Adrenal gland (tissue), 19 donors: ENCODE measurements at regions of chr7 and their contacts with region 1.

Region 1: GRCh38 chr7:37833107-37833817 is 15.1 kb upstream of the NME8 start:
- DNase-seq: peak; percentile 21 to 58 (median 34)
- H3K4me3 ChIP-seq: peak overlapping the region in 1 of 4 donors; percentile 41
- H3K27ac ChIP-seq: no peak overlapping the region
- H3K4me1 ChIP-seq: no peaks in the 10 kb centered on the region
- H3K27me3 ChIP-seq: no peaks in the 10 kb centered on the region
- CTCF ChIP-seq: peak; percentile 38 to 73 (median 65)
- POLR2A ChIP-seq: no peak

Region 2: GRCh38 chr7:37201003-37201875 is 632.0 kb before region 1 on chr7:
- intact Hi-C with region 1: loop called in 1 of 2 experiments (anchors 10 kb)
- DNase-seq: peak; percentile 79 to 95 (median 88)
- H3K4me3 ChIP-seq: no peak overlapping the region
- H3K27ac ChIP-seq: peak overlapping the region in 4 of 5 donors; percentile 29 to 73 (median 60)
- H3K4me1 ChIP-seq: peaks cover 5 to 25% of the 10 kb centered on the region in 2 donors
- H3K27me3 ChIP-seq: no peaks in the 10 kb centered on the region
- CTCF ChIP-seq: peak; percentile 83 to 90 (median 86)
- POLR2A ChIP-seq: no peak

Region 3: GRCh38 chr7:37732253-37732652 is 101.0 kb before region 1 on chr7:
- intact Hi-C with region 1: no loop called
- DNase-seq: peak in 5 of 7 donors; percentile 24 to 57 (median 35)
- H3K4me3 ChIP-seq: no peak overlapping the region
- H3K27ac ChIP-seq: no peak overlapping the region
- H3K4me1 ChIP-seq: peaks cover 0 to 4% of the 10 kb centered on the region in 2 donors
- H3K27me3 ChIP-seq: no peaks in the 10 kb centered on the region
- CTCF ChIP-seq: peak in 5 of 6 experiments; percentile 7 to 52 (median 47)
- POLR2A ChIP-seq: no peak